Caco-2 (cell line): ENCODE measurements at regions of chr10 and their contacts with region 1.

Region 1: GRCh38 chr10:72048450-72049124 is 39.8 kb downstream of the SPOCK2 start:
- DNase-seq: peak; percentile 94 to 97
- H3K4me3 ChIP-seq: no peak overlapping the region
- H3K4me3 Mint-ChIP-seq: no peak overlapping the region
- H3K27ac Mint-ChIP-seq: peak overlapping the region; percentile 82
- H3K4me1 ChIP-seq: peaks cover 24% of the 10 kb centered on the region
- H3K4me1 Mint-ChIP-seq: peaks cover 20% of the 10 kb centered on the region
- H3K27me3 ChIP-seq: no peaks in the 10 kb centered on the region
- H3K27me3 Mint-ChIP-seq: no peaks in the 10 kb centered on the region
- CTCF ChIP-seq: peak; percentile 99 to 100

Region 2: DNA sequence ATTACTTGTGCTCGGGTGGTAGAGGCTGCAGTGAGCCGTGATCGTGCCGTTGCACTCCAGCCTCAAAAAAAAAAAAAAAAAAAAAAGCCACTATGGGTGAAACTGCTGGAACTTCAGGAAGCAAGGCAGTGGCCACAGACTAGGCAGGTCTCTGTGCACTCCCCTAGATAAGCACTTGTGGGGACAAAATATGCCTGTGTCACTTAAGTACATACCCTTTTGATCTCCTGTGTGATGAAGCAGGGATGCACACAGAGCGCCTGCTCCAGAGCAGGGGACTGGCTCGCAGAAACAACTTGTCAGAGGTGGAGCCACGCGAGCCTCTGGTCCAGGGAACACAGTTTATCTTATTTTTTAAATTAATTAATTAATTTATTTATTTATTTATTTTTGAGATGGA is 154.7 kb before region 1 on chr10:
- CTCF ChIA-PET with region 1: interaction called, 86 read pairs
- POLR2A ChIA-PET with region 1: no interaction called
- intact Hi-C with region 1: loop called (anchors 1 kb)
- DNase-seq: no peak
- H3K4me3 ChIP-seq: no peak overlapping the region
- H3K4me3 Mint-ChIP-seq: no peak overlapping the region
- H3K27ac Mint-ChIP-seq: no peak overlapping the region
- H3K4me1 ChIP-seq: peaks cover 22% of the 10 kb centered on the region
- H3K4me1 Mint-ChIP-seq: peaks cover 20% of the 10 kb centered on the region
- H3K27me3 ChIP-seq: no peaks in the 10 kb centered on the region
- H3K27me3 Mint-ChIP-seq: no peaks in the 10 kb centered on the region
- CTCF ChIP-seq: no peak

Region 3: GRCh38 chr10:71974489-71975021 is 74.0 kb before region 1 on chr10:
- CTCF ChIA-PET with region 1: interaction called, 11 read pairs
- POLR2A ChIA-PET with region 1: no interaction called
- intact Hi-C with region 1: no loop called
- DNase-seq: no peak
- H3K4me3 ChIP-seq: no peak overlapping the region
- H3K4me3 Mint-ChIP-seq: no peak overlapping the region
- H3K27ac Mint-ChIP-seq: no peak overlapping the region
- H3K4me1 ChIP-seq: peaks cover 28% of the 10 kb centered on the region
- H3K4me1 Mint-ChIP-seq: peaks cover 26% of the 10 kb centered on the region
- H3K27me3 ChIP-seq: no peaks in the 10 kb centered on the region
- H3K27me3 Mint-ChIP-seq: no peaks in the 10 kb centered on the region
- CTCF ChIP-seq: no peak

Region 4: GRCh38 chr10:72026278-72027111 is 22.1 kb before region 1 on chr10:
- CTCF ChIA-PET with region 1: interaction called, 22 read pairs
- POLR2A ChIA-PET with region 1: no interaction called
- intact Hi-C with region 1: no loop called
- DNase-seq: no peak
- H3K4me3 ChIP-seq: no peak overlapping the region
- H3K4me3 Mint-ChIP-seq: no peak overlapping the region
- H3K27ac Mint-ChIP-seq: no peak overlapping the region
- H3K4me1 ChIP-seq: peaks cover 52% of the 10 kb centered on the region
- H3K4me1 Mint-ChIP-seq: peaks cover 32% of the 10 kb centered on the region
- H3K27me3 ChIP-seq: no peaks in the 10 kb centered on the region
- H3K27me3 Mint-ChIP-seq: no peaks in the 10 kb centered on the region
- CTCF ChIP-seq: no peak

Region 5: DNA sequence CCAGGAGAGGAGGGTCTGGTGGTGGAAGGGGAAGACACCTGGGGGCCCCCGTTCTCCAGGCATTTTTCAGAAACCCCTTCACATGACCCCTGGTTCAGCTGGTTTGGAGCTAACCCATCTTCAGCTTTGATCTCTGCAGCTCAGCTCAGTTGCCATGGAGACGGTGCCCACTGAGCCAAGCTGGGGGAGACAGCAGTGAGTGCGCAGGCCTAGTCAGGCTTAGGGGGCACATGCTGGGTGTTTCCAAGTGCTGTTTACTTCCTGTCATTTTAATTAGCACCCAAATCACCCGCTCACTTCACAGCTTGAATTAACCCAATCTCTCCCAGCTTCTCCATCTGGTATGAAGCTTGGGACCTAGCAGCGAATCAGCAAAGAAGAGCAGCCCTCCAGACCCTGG is 30.8 kb after region 1 on chr10:
- CTCF ChIA-PET with region 1: interaction called, 10 read pairs
- POLR2A ChIA-PET with region 1: no interaction called
- intact Hi-C with region 1: no loop called
- DNase-seq: peak in 1 of 2 experiments; percentile 33
- H3K4me3 ChIP-seq: no peak overlapping the region
- H3K4me3 Mint-ChIP-seq: no peak overlapping the region
- H3K27ac Mint-ChIP-seq: no peak overlapping the region
- H3K4me1 ChIP-seq: peaks cover 13% of the 10 kb centered on the region
- H3K4me1 Mint-ChIP-seq: peaks cover 18% of the 10 kb centered on the region
- H3K27me3 ChIP-seq: no peaks in the 10 kb centered on the region
- H3K27me3 Mint-ChIP-seq: no peaks in the 10 kb centered on the region
- CTCF ChIP-seq: no peak

Region 6: DNA sequence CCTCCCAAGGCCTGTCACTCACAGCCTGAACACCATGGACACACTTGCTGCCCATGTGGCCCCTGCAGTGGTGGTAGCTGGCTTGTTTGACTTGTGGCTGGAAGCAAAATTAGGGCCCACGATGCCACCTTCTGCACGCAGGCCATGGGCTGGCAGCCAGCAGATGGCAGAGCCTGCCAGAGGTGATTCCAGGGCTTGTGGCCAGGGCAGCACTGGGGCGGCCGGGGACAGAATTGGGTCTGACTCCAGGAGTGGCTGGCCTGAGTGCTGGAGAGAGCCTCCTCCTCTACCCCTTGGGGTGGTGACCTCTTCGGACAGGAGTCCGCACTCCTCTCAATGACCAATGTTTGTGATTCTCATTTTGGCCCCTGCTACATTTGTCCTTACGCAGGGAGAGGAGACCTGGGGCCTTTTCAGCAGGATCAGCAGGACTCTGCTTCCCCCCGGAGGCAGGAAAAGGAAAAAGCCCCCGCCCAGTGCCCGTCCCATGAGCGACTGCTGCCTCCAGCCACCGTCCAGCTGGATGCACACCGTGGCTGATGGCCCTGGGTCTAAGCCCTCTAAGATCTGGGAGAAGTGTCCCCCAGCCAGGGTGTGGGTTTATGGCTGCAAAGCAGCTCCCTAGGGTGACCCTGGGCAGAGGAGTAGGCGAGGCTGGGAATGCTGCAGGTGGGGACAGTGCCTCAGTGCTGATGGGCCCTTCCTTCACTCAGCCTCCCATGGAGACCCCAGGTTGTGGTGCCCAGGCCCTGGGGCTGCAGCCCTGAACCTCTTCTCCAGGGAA is 279.6 kb after region 1 on chr10:
- CTCF ChIA-PET with region 1: interaction called, 9 read pairs
- POLR2A ChIA-PET with region 1: no interaction called
- intact Hi-C with region 1: loop called (anchors 5 kb)
- DNase-seq: peak; percentile 81 to 91
- H3K4me3 ChIP-seq: no peak overlapping the region
- H3K4me3 Mint-ChIP-seq: no peak overlapping the region
- H3K27ac Mint-ChIP-seq: peak overlapping the region; percentile 63
- H3K4me1 ChIP-seq: 0 out of 2 replicates have a peak, but pooled peaks cover 8% of the 10 kb centered on the region
- H3K4me1 Mint-ChIP-seq: peaks cover 17% of the 10 kb centered on the region
- H3K27me3 ChIP-seq: no peaks in the 10 kb centered on the region
- H3K27me3 Mint-ChIP-seq: no peaks in the 10 kb centered on the region
- CTCF ChIP-seq: peak; percentile 78 to 95